ENCODE measurements at regions of chr3 and their contacts with region 1.

Region 1: DNA sequence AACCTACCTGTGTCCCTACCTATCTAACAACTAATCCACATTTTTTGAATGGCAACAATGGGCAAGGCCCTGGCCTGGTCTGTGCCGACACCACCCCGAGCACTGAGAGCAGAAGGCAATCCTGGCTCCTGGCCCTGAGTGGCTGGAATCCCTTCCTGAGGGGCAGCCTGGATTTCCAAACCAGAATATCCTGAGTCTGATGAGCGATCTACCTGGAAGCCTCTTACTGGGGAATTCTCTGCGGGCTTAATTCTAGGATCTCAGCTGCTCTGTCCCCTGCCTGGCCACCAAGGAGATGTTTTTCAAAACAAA is 22.1 kb downstream of the ATP2B2 start:
- DNase-seq: no peak
- H3K4me3 ChIP-seq: no peak overlapping the region
- CTCF ChIP-seq: no peak

Region 2: GRCh38 chr3:10557781-10558373 is 74.6 kb after region 1 on chr3:
- in situ Hi-C with region 1: loop called (anchors 5 kb)
- DNase-seq: peak; percentile 32
- H3K4me3 ChIP-seq: no peak overlapping the region
- CTCF ChIP-seq: no peak

Measured in astrocyte of the cerebellum (primary cell).